Uterus (tissue), 4 donors: ENCODE measurements at regions of chr6 and their contacts with region 1.

Region 1: GRCh38 chr6:43769526-43770416 is at the start of gene VEGFA:
- DNase-seq: peak; percentile 91
- H3K4me3 ChIP-seq: peak within 1 kb of the TSS; percentile 74 to 88
- H3K27ac ChIP-seq: peak within 1 kb of the TSS; percentile 89
- H3K4me1 ChIP-seq: peaks cover 0 to 5% of the 10 kb centered on the region in 2 donors
- H3K27me3 ChIP-seq: no peaks in the 10 kb centered on the region
- CTCF ChIP-seq: peak; percentile 94 to 98 (median 96)
- POLR2A ChIP-seq: peak; percentile 77 to 93
- total RNA-seq, gene VEGFA: 81.0 to 247 (median 156) TPM

Region 2: DNA sequence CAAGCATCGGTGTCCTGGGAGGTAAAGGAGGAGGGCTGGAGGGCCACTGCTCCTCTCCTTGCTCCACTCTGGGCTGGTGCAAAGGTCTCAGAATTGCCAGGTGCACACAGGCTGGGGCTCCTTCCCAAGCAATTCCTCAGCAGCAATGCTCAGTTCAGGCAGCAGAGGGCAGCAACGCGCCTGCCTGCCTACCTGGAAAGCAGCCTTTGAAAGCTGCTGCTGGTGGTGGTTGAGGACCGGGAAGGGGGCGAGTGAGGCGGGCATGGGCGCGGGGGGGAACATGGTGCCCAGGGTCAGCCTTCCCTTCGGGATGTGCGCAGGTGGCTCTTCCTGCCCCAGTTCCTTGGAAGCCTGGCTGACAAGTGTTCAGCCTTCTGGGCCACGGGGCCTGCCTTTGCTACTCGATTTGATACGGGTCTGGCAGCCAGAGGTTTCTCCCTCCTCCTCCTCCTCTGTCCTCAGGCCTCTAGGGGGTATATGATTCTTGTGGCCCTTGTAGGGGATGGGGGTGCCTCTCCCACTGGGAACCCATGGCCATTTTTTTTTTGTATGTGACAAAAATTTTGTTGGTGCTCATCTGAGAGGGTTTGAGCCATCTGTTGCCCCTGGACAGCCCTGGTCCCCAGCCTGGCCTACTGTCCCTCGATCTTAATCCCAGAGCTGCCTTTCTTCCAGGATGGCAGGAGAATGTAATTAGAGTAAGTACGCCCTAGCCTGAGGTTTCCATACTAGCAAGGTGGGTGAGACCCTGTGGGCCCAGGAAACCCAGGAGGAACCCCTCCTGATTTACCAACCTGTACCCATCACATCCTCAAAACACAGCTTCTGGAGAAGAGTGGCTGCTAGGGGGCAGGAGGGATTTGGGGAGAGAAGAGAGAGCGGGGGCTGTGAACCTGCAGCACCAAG is 102.3 kb before region 1 on chr6:
- intact Hi-C with region 1: loop called (anchors 5 kb)
- DNase-seq: peak; percentile 83 to 89
- H3K4me3 ChIP-seq: no peak overlapping the region
- H3K27ac ChIP-seq: peak overlapping the region; percentile 75 to 81
- H3K4me1 ChIP-seq: peaks cover 21 to 33% of the 10 kb centered on the region in 2 donors
- H3K27me3 ChIP-seq: no peaks in the 10 kb centered on the region
- CTCF ChIP-seq: peak; percentile 95 to 97 (median 97)
- POLR2A ChIP-seq: no peak

Region 3: DNA sequence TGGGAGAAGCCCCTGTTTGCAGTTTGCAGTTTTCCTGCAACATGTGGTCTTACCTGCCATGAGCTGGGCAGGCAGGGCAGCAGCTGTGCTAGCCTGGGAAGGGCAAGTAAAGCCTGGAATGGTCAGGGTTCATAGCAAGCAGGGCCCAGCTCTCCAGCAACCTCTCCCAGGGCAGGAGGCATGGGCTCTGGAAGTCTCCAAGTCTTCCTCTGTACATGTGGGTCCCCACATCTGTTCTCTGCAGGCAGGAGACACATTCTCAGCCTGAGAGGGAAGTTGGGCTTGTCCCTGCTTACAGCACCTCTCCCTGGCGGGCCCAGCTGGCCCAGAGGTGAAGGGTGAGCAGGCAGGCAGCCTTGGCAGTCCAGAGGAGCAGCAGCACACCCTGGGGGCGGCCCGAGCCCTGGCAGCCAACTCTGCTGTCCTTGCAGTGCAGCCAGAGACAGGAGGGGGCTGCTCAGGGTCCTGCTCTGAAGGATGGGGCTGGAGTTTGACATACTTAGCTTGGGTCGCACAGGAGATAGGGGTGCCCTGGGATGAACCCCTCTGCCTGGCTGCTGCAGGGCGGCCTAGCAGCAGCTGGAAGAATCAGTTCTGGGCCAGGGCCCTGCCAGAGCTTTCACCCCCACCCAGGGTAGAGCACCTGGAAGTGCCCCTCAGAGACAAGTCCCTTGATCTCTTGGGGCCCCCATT is 181.4 kb after region 1 on chr6:
- intact Hi-C with region 1: loop called (anchors 5 kb)
- DNase-seq: peak; percentile 47 to 55
- H3K4me3 ChIP-seq: no peak overlapping the region
- H3K27ac ChIP-seq: no peak overlapping the region
- H3K4me1 ChIP-seq: no peaks in the 10 kb centered on the region
- H3K27me3 ChIP-seq: no peaks in the 10 kb centered on the region
- CTCF ChIP-seq: peak; percentile 35 to 71 (median 54)
- POLR2A ChIP-seq: no peak

Region 4: GRCh38 chr6:44002593-44003344 is 233.0 kb after region 1 on chr6:
- intact Hi-C with region 1: loop called (anchors 10 kb)
- DNase-seq: peak; percentile 60 to 68
- H3K4me3 ChIP-seq: peak overlapping the region; percentile 4 to 29
- H3K27ac ChIP-seq: peak overlapping the region; percentile 6 to 56
- H3K4me1 ChIP-seq: peaks cover 0 to 6% of the 10 kb centered on the region in 2 donors
- H3K27me3 ChIP-seq: no peaks in the 10 kb centered on the region
- CTCF ChIP-seq: peak; percentile 15 to 48 (median 32)
- POLR2A ChIP-seq: peak in 1 of 2 donors; percentile 33

Region 5: GRCh38 chr6:44074439-44075136 is 304.8 kb after region 1 on chr6:
- intact Hi-C with region 1: loop called (anchors 2 kb)
- DNase-seq: peak; percentile 76 to 81
- H3K4me3 ChIP-seq: no peak overlapping the region
- H3K27ac ChIP-seq: peak overlapping the region; percentile 81 to 92
- H3K4me1 ChIP-seq: peaks cover 14 to 16% of the 10 kb centered on the region in 2 donors
- H3K27me3 ChIP-seq: no peaks in the 10 kb centered on the region
- CTCF ChIP-seq: peak; percentile 84 to 90 (median 87)
- POLR2A ChIP-seq: no peak